CD4-positive, alpha-beta T cell (primary cell): ENCODE measurements at regions of chr4 and their contacts with region 1.

Region 1: GRCh38 chr4:142530728-142531127 is 315.4 kb downstream of the INPP4B start:
- DNase-seq: no peak
- ATAC-seq: no peak
- H3K4me3 ChIP-seq: no peak overlapping the region
- H3K4me3 Mint-ChIP-seq: no peak overlapping the region
- H3K27ac ChIP-seq: no peak overlapping the region
- H3K27ac Mint-ChIP-seq: no peak overlapping the region
- H3K4me1 ChIP-seq: no peaks in the 10 kb centered on the region
- H3K4me1 Mint-ChIP-seq: peaks cover 7% of the 10 kb centered on the region
- H3K27me3 ChIP-seq: no peaks in the 10 kb centered on the region
- H3K27me3 Mint-ChIP-seq: no peaks in the 10 kb centered on the region
- CTCF ChIP-seq: no peak

Region 2: GRCh38 chr4:142485452-142485851 is 45.3 kb before region 1 on chr4:
- CTCF ChIA-PET with region 1: no interaction called
- POLR2A ChIA-PET with region 1: no interaction called
- intact Hi-C with region 1: loop called in 1 of 2 experiments (anchors 5 kb)
- DNase-seq: no peak
- ATAC-seq: no peak
- H3K4me3 ChIP-seq: no peak overlapping the region
- H3K4me3 Mint-ChIP-seq: no peak overlapping the region
- H3K27ac ChIP-seq: no peak overlapping the region
- H3K27ac Mint-ChIP-seq: no peak overlapping the region
- H3K4me1 ChIP-seq: no peaks in the 10 kb centered on the region
- H3K4me1 Mint-ChIP-seq: peaks cover 27% of the 10 kb centered on the region
- H3K27me3 ChIP-seq: no peaks in the 10 kb centered on the region
- H3K27me3 Mint-ChIP-seq: no peaks in the 10 kb centered on the region
- CTCF ChIP-seq: no peak

Region 3: GRCh38 chr4:142567199-142567598 is 36.5 kb after region 1 on chr4:
- CTCF ChIA-PET with region 1: no interaction called
- POLR2A ChIA-PET with region 1: no interaction called
- intact Hi-C with region 1: no loop called
- DNase-seq: peak; percentile 26 to 88 (median 50)
- ATAC-seq: peak; percentile 73
- H3K4me3 ChIP-seq: peak overlapping the region; percentile 54
- H3K4me3 Mint-ChIP-seq: peak overlapping the region; percentile 88
- H3K27ac ChIP-seq: peak overlapping the region; percentile 72 to 78
- H3K27ac Mint-ChIP-seq: peak overlapping the region; percentile 95
- H3K4me1 ChIP-seq: peaks cover 9% of the 10 kb centered on the region
- H3K4me1 Mint-ChIP-seq: peaks cover 81% of the 10 kb centered on the region
- H3K27me3 ChIP-seq: no peaks in the 10 kb centered on the region
- H3K27me3 Mint-ChIP-seq: no peaks in the 10 kb centered on the region
- CTCF ChIP-seq: peak; percentile 59